Esophagus muscularis mucosa (tissue), 4 donors: ENCODE measurements at regions of chr11 and their contacts with region 1.

Region 1: GRCh38 chr11:57567515-57568329 is at the start of gene UBE2L6:
- DNase-seq: no peak
- H3K4me3 ChIP-seq: peak within 1 kb of the TSS; percentile 70 to 97 (median 90)
- H3K27ac ChIP-seq: peak within 1 kb of the TSS; percentile 82 to 89 (median 85)
- H3K4me1 ChIP-seq: peaks cover 17 to 45% (median 35%) of the 10 kb centered on the region in 4 donors
- H3K27me3 ChIP-seq: no peaks in the 10 kb centered on the region
- CTCF ChIP-seq: peak in 1 of 3 experiments; percentile 89
- EP300 ChIP-seq: no peak
- POLR2A ChIP-seq: no peak
- total RNA-seq, gene UBE2L6: 15.8 to 40.3 (median 32.8) TPM

Region 2: DNA sequence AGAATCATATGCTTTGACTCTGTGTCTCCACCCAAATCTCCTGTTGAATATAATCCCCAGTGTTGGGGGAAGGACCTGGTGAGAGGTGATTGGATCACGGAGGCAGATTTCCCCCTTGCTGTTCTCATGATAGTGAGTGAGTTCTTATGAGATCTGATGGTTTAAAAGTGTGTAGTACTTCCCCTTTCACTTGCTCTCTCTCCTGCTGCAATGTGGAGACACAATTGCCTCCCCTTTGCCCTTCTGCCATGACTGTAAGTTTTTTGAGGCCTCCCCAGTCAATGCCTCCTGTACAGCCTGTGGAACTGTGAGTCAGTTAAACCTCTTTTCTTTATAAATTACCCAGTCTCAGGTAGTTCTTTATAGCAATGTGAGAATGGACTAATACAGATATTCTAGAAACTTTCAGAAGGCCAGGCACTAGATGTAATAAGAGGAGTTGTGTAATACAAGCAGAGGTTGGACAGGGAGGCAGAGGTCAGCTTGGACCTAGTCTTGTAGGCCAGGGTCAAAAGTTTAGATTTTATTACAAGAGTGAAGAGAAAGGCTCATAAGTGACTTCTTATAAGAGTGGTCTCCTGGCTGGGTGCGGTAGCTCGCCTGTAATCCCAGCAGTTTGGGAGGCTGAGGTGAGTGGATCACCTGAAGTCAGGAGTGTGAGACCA is 20.5 kb after region 1 on chr11:
- intact Hi-C with region 1: loop called (anchors 2 kb)
- DNase-seq: no peak
- H3K4me3 ChIP-seq: no peak overlapping the region
- H3K27ac ChIP-seq: no peak overlapping the region
- H3K4me1 ChIP-seq: no peaks in the 10 kb centered on the region
- H3K27me3 ChIP-seq: no peaks in the 10 kb centered on the region
- CTCF ChIP-seq: no peak
- EP300 ChIP-seq: no peak
- POLR2A ChIP-seq: no peak

Region 3: DNA sequence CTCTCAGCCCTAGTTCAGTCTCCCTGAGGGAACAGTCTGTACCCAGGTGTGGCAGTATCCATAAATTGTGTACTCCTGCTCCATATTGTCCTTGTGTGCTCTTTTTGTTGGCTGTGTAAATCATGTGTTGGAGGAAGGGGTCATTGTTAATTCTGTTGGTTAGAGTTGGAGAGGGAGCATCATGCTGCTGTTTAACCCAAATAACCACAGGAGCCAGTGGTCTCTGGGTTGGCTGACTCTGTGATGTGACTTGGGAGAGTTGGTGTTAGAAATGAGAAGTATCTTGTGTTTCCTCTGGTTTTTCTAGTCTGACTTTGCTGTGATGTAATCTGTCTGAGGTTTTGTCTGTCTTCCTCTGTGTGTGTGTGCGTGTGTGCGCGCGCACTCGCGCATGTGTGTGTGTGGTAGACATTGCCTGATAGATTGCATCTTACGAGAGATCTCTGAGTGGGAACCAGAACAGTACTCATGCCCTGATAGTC is 224.4 kb after region 1 on chr11:
- intact Hi-C with region 1: loop called (anchors 10 kb)
- DNase-seq: peak; percentile 92
- H3K4me3 ChIP-seq: no peak overlapping the region
- H3K27ac ChIP-seq: peak overlapping the region; percentile 34 to 75 (median 54)
- H3K4me1 ChIP-seq: peaks cover 73 to 85% (median 75%) of the 10 kb centered on the region in 4 donors
- H3K27me3 ChIP-seq: no peaks in the 10 kb centered on the region
- CTCF ChIP-seq: no peak
- EP300 ChIP-seq: no peak
- POLR2A ChIP-seq: no peak